Pancreas (tissue), 10 donors: ENCODE measurements at regions of chr4 and their contacts with region 1.

Region 1: GRCh38 chr4:184273166-184274147 is 55.8 kb upstream of the ENPP6 start:
- DNase-seq: no peak
- ATAC-seq: no peak
- H3K4me3 ChIP-seq: no peak overlapping the region
- H3K27ac ChIP-seq: no peak overlapping the region
- H3K4me1 ChIP-seq: no peaks in the 10 kb centered on the region
- H3K27me3 ChIP-seq: no peaks in the 10 kb centered on the region
- CTCF ChIP-seq: no peak

Region 2: DNA sequence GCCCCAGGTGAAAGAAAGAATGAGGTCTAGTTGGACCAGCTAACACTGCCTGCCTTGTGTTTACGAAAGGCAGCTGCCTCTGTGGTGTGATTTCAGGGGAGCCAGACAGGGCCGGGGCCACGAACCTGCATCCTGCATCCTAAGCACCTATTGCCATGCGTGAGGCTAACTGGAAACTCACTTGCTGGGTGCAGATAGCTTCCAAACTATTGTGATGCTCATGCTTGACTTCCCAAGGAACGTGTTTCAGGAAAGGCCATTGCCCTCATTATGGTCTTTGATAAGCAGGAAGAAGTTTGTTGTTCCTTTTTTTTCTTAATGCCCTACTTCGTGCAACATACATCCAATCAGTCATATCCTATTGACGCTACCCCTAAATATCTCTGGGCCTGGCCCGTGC is 203.2 kb after region 1 on chr4:
- intact Hi-C with region 1: no loop called
- DNase-seq: no peak
- ATAC-seq: no peak
- H3K4me3 ChIP-seq: no peak overlapping the region
- H3K27ac ChIP-seq: peak overlapping the region in 1 of 4 donors; percentile 98
- H3K4me1 ChIP-seq: peaks cover 11 to 26% (median 14%) of the 10 kb centered on the region in 3 donors
- H3K27me3 ChIP-seq: no peaks in the 10 kb centered on the region
- CTCF ChIP-seq: no peak

Region 3: GRCh38 chr4:184544788-184545409 is 271.4 kb after region 1 on chr4:
- intact Hi-C with region 1: loop called in 1 of 3 experiments (anchors 10 kb)
- DNase-seq: no peak
- ATAC-seq: no peak
- H3K4me3 ChIP-seq: no peak overlapping the region
- H3K27ac ChIP-seq: no peak overlapping the region
- H3K4me1 ChIP-seq: no peaks in the 10 kb centered on the region
- H3K27me3 ChIP-seq: peaks cover 0 to 5% (median 0%) of the 10 kb centered on the region in 4 donors
- CTCF ChIP-seq: no peak